Activated T-helper 2 cell treated with anti-CD3 and anti-CD28 coated beads, Interferon-gamma antibody, Interleukin-2, Interleukin-4, amounts not matched to agents 10 μg/mL and 5 μg/mL and 100 μg/mL, durations not matched to agents 14 hours and 24 hours and 36 hours (primary cell): ENCODE measurements at regions of chr6 and their contacts with region 1.

Region 1: DNA sequence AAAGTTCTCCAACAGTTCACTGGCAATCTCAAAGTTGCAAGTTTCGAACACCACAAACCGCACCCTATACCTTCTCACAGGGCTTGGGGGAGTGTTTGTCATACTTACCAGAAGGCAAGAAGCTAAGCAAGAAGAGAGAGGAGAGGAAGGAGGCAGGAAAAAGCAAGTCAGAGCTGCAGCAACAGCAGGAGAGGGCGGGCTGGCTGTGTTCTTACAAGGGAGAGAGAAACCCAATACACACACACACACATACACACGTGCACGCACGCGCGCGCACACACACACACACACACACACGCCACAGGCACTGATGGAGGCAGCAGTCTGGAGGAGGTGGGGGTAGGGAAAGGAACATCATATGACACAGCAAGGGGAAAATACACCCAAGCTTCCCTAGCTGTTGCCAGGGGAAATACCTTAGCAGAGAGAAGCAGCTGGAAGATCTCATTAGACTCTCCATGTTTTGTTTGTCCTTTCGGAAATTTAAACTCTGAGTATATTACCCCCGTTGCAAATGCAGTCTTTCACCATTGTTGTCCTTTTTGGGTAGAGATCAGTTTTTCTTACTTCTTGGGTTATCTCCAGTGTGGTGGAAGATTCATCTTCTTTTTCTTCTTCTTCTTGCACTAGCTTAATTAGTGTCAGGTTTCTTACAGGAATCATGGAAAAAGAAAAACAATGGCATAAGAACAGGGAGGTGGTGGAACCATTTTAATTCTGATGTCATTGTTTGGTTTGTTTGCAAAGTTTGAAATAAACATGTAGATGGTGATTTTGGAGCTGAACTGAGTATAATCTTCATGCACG is at the start of gene TXLNB:
- DNase-seq: peak; percentile 81
- H3K4me3 Mint-ChIP-seq: peak within 1 kb of the TSS; percentile 76
- H3K27ac Mint-ChIP-seq: peak within 1 kb of the TSS; percentile 99
- H3K4me1 Mint-ChIP-seq: peaks cover 40% of the 10 kb centered on the region
- H3K27me3 Mint-ChIP-seq: no peaks in the 10 kb centered on the region
- total RNA-seq, gene TXLNB: 0.05 TPM in 1 of 2 replicates, not detected in the other

Region 2: DNA sequence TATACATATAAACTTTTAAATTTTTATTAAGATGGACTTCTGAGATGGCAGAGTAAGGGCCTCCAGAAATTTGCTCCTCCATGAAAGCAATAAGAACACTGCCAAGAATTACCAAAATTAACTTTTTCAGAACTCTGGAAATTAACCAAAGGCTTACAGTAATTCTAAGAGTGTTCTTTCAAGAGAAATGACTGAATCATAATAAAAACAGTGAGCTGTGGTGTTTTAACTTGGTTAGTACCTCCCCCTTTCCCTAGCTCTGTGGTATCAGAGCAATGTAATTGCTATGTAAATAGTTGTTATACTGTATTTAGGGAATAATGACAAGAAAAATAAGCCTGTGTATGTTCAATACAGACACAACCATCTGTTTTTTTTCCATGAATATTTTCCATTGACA is 138.2 kb before region 1 on chr6:
- intact Hi-C with region 1: loop called (anchors 2 kb)
- DNase-seq: no peak
- H3K4me3 Mint-ChIP-seq: peak overlapping the region; percentile 15
- H3K27ac Mint-ChIP-seq: peak overlapping the region; percentile 73
- H3K4me1 Mint-ChIP-seq: peaks cover 69% of the 10 kb centered on the region
- H3K27me3 Mint-ChIP-seq: no peaks in the 10 kb centered on the region

Region 3: GRCh38 chr6:139219271-139219729 is 72.7 kb before region 1 on chr6:
- intact Hi-C with region 1: loop called (anchors 1 kb)
- DNase-seq: peak; percentile 55
- H3K4me3 Mint-ChIP-seq: no peak overlapping the region
- H3K27ac Mint-ChIP-seq: no peak overlapping the region
- H3K4me1 Mint-ChIP-seq: peaks cover 9% of the 10 kb centered on the region
- H3K27me3 Mint-ChIP-seq: peaks cover 3% of the 10 kb centered on the region

Region 4: GRCh38 chr6:139262519-139263300 is 29.3 kb before region 1 on chr6:
- intact Hi-C with region 1: loop called (anchors 1 kb)
- DNase-seq: no peak
- H3K4me3 Mint-ChIP-seq: peak overlapping the region; percentile 69
- H3K27ac Mint-ChIP-seq: peak overlapping the region; percentile 85
- H3K4me1 Mint-ChIP-seq: peaks cover 17% of the 10 kb centered on the region
- H3K27me3 Mint-ChIP-seq: no peaks in the 10 kb centered on the region

Region 5: DNA sequence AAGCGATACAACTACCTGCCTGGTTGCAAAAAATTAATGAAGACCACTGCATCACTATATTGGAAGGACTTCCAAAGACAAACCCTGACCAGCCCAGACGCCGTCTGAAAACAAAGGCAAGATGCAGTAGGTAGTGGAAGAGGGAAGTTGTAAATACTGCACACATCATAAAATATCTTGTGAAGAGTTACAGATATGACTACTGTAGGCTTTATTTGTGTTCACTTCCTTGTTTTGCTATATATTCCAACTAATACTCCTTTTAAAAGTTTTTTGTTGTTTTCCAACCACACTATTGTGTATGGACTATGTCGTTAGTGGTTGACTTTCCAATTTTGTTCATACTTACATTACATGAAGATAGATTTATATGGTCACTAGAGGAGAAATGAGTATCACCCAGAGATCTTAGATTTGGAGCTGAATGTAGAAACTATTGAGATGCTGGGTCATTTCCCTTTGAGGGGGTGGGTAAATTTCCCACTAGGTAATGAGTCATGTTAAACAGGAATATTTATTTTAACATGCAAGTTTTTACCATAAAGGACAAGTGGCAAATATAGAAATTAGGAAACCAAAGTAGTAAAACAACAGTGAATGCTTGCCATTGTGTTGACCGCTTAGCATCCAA is 16.4 kb after region 1 on chr6:
- intact Hi-C with region 1: loop called (anchors 1 kb)
- DNase-seq: no peak
- H3K4me3 Mint-ChIP-seq: no peak overlapping the region
- H3K27ac Mint-ChIP-seq: peak overlapping the region; percentile 84
- H3K4me1 Mint-ChIP-seq: peaks cover 24% of the 10 kb centered on the region
- H3K27me3 Mint-ChIP-seq: no peaks in the 10 kb centered on the region

Region 6: GRCh38 chr6:139355172-139355571 is 63.2 kb after region 1 on chr6:
- intact Hi-C with region 1: loop called (anchors 2 kb)
- DNase-seq: no peak
- H3K4me3 Mint-ChIP-seq: no peak overlapping the region
- H3K27ac Mint-ChIP-seq: no peak overlapping the region
- H3K4me1 Mint-ChIP-seq: peaks cover 5% of the 10 kb centered on the region
- H3K27me3 Mint-ChIP-seq: peaks cover 3% of the 10 kb centered on the region

Region 7: GRCh38 chr6:139600919-139601475 is 309.0 kb after region 1 on chr6:
- intact Hi-C with region 1: loop called (anchors 1 kb)
- DNase-seq: no peak
- H3K4me3 Mint-ChIP-seq: no peak overlapping the region
- H3K27ac Mint-ChIP-seq: peak overlapping the region; percentile 57
- H3K4me1 Mint-ChIP-seq: peaks cover 5% of the 10 kb centered on the region
- H3K27me3 Mint-ChIP-seq: peaks cover 1% of the 10 kb centered on the region